A549 (cell line): ENCODE measurements at regions of chr15 and their contacts with region 1.

Region 1: DNA sequence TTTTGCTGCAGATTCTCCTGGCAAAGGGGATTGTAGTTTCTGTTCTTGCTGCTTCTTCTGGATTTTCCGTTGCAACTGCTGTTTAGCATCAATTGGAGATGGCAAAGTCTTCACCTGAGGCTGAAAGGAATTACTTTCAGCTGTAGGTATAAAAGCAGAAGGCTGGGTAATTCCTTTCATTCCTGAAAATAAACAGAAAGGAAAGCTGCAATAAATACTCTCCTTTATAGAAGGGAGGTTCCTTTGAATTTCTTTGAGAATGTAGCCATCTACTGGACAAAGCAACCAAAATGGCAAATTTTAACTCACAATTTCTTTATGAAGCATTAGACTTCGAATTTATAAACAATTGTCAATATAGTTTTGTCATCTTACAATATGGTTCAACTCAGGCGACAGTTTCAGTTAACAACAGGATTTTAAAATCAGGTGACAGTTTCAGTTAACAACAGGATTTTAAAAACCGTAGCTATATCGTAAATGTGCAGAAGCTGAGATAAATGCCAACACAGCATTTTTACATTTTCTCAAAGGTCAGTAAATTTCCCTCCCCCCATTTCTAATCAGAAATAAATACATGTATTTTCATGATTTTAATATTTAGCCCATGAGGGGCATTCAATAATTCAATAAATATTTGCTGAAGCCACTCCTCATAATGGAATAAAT is 104.9 kb upstream of the NEDD4 start:
- DNase-seq: no peak
- ATAC-seq: no peak
- H3K4me3 ChIP-seq: no peak overlapping the region
- H3K27ac ChIP-seq: no peak overlapping the region
- H3K4me1 ChIP-seq: no peaks in the 10 kb centered on the region
- CTCF ChIP-seq: peak; percentile 31; the same call in 2 of the 3 replicates
- EP300 ChIP-seq: no peak
- POLR2A ChIP-seq: no peak
- RAD21 ChIP-seq: peak; percentile 31 to 32; a peak in 3 of 5 replicates

Region 2: DNA sequence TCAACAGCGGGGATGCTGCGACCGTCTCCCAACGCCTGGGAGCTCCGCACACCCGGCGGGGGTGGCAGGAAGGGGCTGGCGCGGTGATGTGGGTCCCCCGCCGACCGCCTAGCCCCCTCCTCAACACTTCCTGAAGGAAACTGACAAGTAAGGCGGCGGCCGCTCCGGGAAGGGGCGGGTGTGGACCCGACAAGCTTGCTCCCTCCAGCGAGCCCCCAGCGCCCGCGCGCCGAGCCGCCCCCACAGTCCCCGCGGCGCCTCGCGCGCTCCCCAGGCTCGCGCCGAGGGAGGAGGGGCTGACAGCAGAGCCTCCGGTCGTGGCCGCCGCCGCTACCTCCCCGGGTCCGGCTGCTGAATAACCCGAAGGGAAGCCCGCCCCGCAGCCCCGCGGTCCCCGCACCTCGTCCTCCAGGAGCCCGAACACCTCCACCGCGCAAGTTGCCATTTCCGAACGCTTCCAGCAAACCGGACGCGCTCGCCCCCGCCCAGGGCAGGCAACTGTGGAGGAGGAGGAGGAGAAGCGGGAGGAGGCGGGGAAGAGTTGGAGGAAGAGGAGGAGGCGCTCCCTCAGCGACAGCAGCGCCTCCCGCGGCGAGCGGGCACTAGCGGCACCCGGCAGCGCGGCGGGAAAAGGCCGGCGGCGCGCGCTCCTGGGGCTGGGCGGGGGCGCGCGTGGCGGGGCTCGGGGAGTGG is 105.1 kb before region 1 on chr15 and contains the start of gene NEDD4:
- CTCF ChIA-PET with region 1: interaction called, 10 read pairs
- POLR2A ChIA-PET with region 1: interaction called, 4 read pairs
- DNase-seq: peak; percentile 85 to 88
- ATAC-seq: peak; percentile 92 to 94
- H3K4me3 ChIP-seq: peak within 1 kb of the TSS; percentile 73
- H3K27ac ChIP-seq: peak within 1 kb of the TSS; percentile 92 to 94
- H3K4me1 ChIP-seq: peaks cover 30% of the 10 kb centered on the region
- CTCF ChIP-seq: peak; percentile 59
- EP300 ChIP-seq: no peak
- POLR2A ChIP-seq: peak; percentile 55; the same call in 1 of the 2 replicates
- RAD21 ChIP-seq: peak in 1 of 2 experiments; percentile 58; a peak in 2 of 5 replicates
- polyA plus RNA-seq, gene NEDD4: 62.9 and 78.8 TPM in 2 replicates